Uterus (tissue), 4 donors: ENCODE measurements at regions of chr3 and their contacts with region 1.

Region 1: GRCh38 chr3:187739561-187740332 is 5.5 kb downstream of the BCL6 start:
- DNase-seq: peak; percentile 95 to 96
- H3K4me3 ChIP-seq: peak overlapping the region; percentile 63 to 86
- H3K27ac ChIP-seq: peak overlapping the region; percentile 98 to 100
- H3K4me1 ChIP-seq: peaks cover 6 to 7% of the 10 kb centered on the region in 2 donors
- H3K27me3 ChIP-seq: no peaks in the 10 kb centered on the region
- CTCF ChIP-seq: peak; percentile 86 to 96 (median 94)
- POLR2A ChIP-seq: peak in 1 of 2 donors; percentile 56

Region 2: DNA sequence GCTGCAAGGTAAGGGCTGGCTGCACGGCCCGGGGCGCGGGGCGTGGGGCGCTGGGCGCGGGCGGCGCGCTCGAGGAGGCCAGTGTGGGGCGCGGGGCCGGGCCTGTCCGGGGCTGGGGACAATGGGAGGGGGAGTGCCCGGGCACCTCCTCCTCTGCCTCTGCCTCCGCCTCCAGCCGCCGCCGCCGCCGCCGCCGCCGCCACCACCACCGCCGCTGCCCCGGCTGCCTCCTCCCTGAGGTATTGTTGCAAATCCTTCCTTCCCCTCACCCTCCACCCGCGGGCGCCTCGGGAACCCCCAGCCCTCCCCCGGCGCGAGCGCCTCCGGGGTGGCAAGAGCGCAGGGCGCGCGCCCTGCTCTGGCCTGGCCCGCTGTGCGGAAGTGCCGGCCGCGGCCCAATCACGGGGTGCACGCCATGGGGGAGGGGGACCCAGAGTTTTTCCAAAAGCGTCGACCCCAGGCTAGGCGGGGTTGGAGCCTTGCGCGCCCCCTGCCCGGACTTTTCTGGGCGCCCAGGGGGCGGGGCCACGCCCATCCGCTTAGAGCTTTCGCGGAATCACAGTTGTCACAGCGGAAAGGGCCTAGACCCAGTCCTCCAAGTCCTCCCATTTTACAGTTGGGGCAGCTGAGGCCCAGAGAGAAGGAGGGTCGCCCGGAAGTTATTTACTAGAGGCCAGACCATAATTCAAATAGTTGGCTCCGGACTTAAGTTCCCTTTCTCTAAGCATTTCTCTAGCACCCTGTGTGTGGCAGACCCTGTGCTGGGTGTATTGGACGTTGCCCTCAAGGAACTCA is 414.5 kb after region 1 on chr3 and contains the start of gene LPP:
- intact Hi-C with region 1: loop called (anchors 5 kb)
- DNase-seq: peak; percentile 71 to 75
- H3K4me3 ChIP-seq: peak within 1 kb of the TSS; percentile 64 to 73
- H3K27ac ChIP-seq: peak within 1 kb of the TSS; percentile 94 to 95
- H3K4me1 ChIP-seq: peaks cover 0 to 4% of the 10 kb centered on the region in 2 donors
- H3K27me3 ChIP-seq: no peaks in the 10 kb centered on the region
- CTCF ChIP-seq: peak in 3 of 4 experiments; percentile 9 to 21 (median 10)
- POLR2A ChIP-seq: peak in 1 of 2 donors; percentile 70
- total RNA-seq, gene LPP: 180 to 1,374 (median 712) TPM

Region 3: DNA sequence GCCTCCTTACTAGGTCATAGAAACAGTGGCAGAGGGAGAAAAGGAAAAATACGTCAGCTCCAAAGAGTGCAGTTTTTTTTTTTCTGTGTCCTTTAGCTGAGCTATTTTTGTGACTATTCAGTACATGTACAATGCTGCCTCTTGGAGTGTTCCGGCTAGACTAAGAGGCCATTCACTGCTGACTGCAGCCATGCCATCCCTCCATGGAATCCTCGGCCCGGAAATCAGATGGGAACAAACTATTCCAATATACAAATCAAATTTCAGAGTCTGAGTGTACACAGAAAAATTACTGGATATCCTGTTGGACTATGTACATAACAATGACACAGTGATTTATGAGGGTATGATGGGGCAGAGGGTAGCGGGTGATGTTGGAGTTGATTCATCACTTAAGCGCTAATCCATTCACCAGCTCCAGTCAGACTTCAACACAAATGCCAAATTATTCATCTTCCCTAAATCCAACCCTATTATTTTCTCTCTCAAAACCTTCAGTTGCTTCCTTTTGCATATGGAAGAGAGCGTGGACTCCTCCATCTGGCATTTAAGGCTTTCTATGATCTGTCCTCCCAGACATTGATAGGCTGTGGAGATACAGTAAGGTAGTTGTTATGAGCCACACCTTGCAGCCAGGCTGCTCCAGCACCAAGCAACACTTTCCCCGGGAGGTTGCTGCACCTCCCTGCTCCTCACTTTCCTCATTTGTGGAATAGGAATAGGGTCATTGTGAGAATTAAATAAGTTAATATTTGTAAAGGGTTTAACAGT is 523.4 kb after region 1 on chr3:
- intact Hi-C with region 1: loop called (anchors 5 kb)
- DNase-seq: peak in 1 of 2 donors; percentile 60
- H3K4me3 ChIP-seq: no peak overlapping the region
- H3K27ac ChIP-seq: peak overlapping the region; percentile 96 to 97
- H3K4me1 ChIP-seq: peaks cover 5 to 14% of the 10 kb centered on the region in 2 donors
- H3K27me3 ChIP-seq: no peaks in the 10 kb centered on the region
- CTCF ChIP-seq: no peak
- POLR2A ChIP-seq: peak in 1 of 2 donors; percentile 15

Region 4: GRCh38 chr3:188947401-188948280 is 1207.9 kb after region 1 on chr3:
- intact Hi-C with region 1: loop called (anchors 5 kb)
- DNase-seq: peak; percentile 97 to 99
- H3K4me3 ChIP-seq: peak overlapping the region; percentile 39
- H3K27ac ChIP-seq: peak overlapping the region; percentile 95 to 96
- H3K4me1 ChIP-seq: peaks cover 10 to 15% of the 10 kb centered on the region in 2 donors
- H3K27me3 ChIP-seq: no peaks in the 10 kb centered on the region
- CTCF ChIP-seq: peak in 3 of 4 experiments; percentile 39 to 55 (median 45)
- POLR2A ChIP-seq: peak; percentile 32 to 70

Region 5: GRCh38 chr3:189148081-189148507 is 1408.3 kb after region 1 on chr3:
- intact Hi-C with region 1: loop called (anchors 5 kb)
- DNase-seq: peak; percentile 70 to 80
- H3K4me3 ChIP-seq: no peak overlapping the region
- H3K27ac ChIP-seq: peak overlapping the region; percentile 66 to 67
- H3K4me1 ChIP-seq: peaks cover 13 to 15% of the 10 kb centered on the region in 2 donors
- H3K27me3 ChIP-seq: no peaks in the 10 kb centered on the region
- CTCF ChIP-seq: peak; percentile 75 to 87 (median 86)
- POLR2A ChIP-seq: no peak